Spleen (tissue), 13 donors: ENCODE measurements at regions of chr5 and their contacts with region 1.

Region 1: DNA sequence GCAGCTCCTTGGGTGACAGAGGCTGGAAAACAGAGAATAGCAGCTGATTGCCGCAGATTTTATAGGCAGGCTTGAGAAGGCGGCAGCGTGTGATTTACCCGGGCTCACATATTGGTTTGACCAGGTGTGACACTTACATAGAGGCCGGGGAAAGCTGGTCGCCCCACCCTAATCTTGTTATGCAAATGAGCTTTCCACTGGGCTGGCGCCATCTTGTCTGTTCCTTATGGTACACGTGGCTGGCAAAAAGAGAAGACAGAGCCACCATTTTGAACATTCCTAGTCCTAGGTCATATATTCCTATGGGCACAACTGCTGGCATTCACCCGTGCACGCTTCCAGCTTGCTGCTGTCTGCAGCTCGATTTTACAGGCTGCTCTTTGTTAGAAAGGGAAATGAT is 11.3 kb upstream of the SPZ1 start:
- DNase-seq: peak; percentile 64
- H3K4me3 ChIP-seq: no peak overlapping the region
- H3K27ac ChIP-seq: no peak overlapping the region
- H3K4me1 ChIP-seq: peaks cover 0 to 7% (median 0%) of the 10 kb centered on the region in 6 donors
- H3K27me3 ChIP-seq: no peaks in the 10 kb centered on the region
- CTCF ChIP-seq: no peak
- POLR2A ChIP-seq: no peak

Region 2: GRCh38 chr5:80093796-80094195 is 214.7 kb before region 1 on chr5:
- intact Hi-C with region 1: loop called (anchors 2 kb)
- DNase-seq: no peak
- H3K4me3 ChIP-seq: no peak overlapping the region
- H3K27ac ChIP-seq: no peak overlapping the region
- H3K4me1 ChIP-seq: peaks cover 0 to 13% (median 0%) of the 10 kb centered on the region in 6 donors
- H3K27me3 ChIP-seq: no peaks in the 10 kb centered on the region
- CTCF ChIP-seq: no peak
- POLR2A ChIP-seq: no peak

Region 3: DNA sequence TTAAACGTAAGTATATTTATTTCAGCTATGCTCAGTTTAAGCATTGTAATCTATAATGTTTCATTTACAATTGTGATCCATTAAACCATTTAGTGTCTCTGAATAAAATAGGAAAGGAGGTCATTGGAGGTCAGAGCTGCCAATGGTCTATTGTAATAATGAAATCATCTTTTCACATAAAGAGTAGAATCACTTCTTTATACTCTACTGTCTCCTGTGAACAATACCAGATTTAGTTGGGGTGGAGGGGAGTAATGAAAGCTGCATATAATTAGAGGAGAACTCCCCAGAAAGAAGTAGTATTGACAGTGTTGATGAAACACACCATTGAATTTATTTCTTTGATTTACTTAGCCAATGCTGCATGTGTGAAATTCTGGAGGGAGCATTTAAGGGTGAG is 64.3 kb after region 1 on chr5:
- intact Hi-C with region 1: no loop called
- DNase-seq: no peak
- H3K4me3 ChIP-seq: no peak overlapping the region
- H3K27ac ChIP-seq: no peak overlapping the region
- H3K4me1 ChIP-seq: peaks cover 0 to 14% (median 3%) of the 10 kb centered on the region in 6 donors
- H3K27me3 ChIP-seq: no peaks in the 10 kb centered on the region
- CTCF ChIP-seq: no peak
- POLR2A ChIP-seq: no peak

Region 4: GRCh38 chr5:80387063-80387768 is 78.7 kb after region 1 on chr5:
- intact Hi-C with region 1: no loop called
- DNase-seq: no peak
- H3K4me3 ChIP-seq: no peak overlapping the region
- H3K27ac ChIP-seq: peak overlapping the region in 2 of 8 donors; percentile 32 to 67
- H3K4me1 ChIP-seq: peaks cover 0 to 12% (median 0%) of the 10 kb centered on the region in 6 donors
- H3K27me3 ChIP-seq: peaks cover 0 to 5% (median 0%) of the 10 kb centered on the region in 7 donors
- CTCF ChIP-seq: no peak
- POLR2A ChIP-seq: no peak